ENCODE measurements at regions of chr3 and their contacts with region 1.

Region 1: DNA sequence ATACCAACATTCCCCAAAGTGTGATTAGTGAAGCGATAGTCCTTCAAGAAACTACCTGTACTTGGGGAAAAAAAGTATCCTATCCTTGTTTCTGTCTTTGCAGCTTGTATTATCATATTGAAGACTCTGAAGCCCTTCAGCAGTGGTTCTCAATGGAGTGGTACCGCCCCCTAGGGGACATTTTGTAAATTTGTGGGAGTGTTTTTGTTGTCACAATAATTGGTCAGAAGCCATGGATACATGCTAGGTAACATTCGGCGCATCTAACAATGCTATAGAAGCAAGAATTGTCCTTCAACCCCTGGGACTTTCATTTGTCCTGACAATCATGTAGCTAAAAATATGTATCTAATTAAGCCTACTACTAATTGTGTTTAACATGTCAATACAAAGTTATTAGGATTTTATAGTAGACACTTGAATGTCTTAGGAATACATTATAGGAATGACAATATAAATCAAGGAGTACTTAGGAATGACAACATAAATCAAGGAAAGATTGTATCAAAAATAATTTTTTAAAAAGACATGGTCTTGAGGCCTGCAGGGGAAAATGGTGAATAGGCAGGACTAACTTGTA is 53.7 kb downstream of the NMD3 start:
- DNase-seq: peak; percentile 63
- ATAC-seq: peak; percentile 42
- H3K4me3 Mint-ChIP-seq: no peak overlapping the region
- H3K27ac Mint-ChIP-seq: no peak overlapping the region
- H3K4me1 Mint-ChIP-seq: no peaks in the 10 kb centered on the region
- H3K27me3 Mint-ChIP-seq: no peaks in the 10 kb centered on the region

Region 2: GRCh38 chr3:160686955-160687535 is 587.8 kb before region 1 on chr3:
- CTCF ChIA-PET with region 1: interaction called, 4 read pairs
- POLR2A ChIA-PET with region 1: no interaction called
- intact Hi-C with region 1: loop called in 1 of 2 experiments (anchors 5 kb)
- DNase-seq: no peak
- ATAC-seq: no peak
- H3K4me3 Mint-ChIP-seq: no peak overlapping the region
- H3K27ac Mint-ChIP-seq: no peak overlapping the region
- H3K4me1 Mint-ChIP-seq: no peaks in the 10 kb centered on the region
- H3K27me3 Mint-ChIP-seq: peaks cover 2% of the 10 kb centered on the region

Region 3: DNA sequence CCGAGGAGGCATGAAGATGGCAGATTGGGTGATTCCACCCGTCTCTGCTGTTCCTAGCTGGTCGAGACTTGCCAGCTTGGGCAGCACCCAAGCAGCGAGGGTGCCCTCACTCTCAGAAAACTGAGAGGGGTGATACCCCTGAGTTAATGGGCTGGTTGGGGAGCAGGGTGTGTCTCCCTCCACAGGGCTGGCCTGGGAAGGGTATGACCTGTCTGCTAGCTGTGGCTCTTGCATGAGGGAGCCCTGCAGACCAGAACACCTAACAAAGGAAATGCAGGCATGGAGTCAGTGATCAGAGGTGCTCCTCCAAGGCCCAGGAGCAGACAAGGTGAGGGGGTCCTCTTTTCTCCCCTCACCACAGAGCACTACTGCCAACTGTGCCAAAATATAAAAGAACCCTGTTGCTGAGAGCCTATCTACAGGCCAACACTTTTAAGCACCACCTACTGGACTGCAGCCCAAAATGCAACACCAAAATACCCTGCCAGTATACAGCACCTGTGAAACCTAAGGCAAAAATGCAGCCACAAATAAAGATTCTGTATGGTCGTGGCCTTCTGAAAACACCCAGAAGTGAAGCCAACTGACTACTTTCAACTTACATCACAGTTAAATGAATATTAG is 554.6 kb before region 1 on chr3:
- CTCF ChIA-PET with region 1: no interaction called
- POLR2A ChIA-PET with region 1: no interaction called
- intact Hi-C with region 1: no loop called
- DNase-seq: no peak
- ATAC-seq: no peak
- H3K4me3 Mint-ChIP-seq: no peak overlapping the region
- H3K27ac Mint-ChIP-seq: no peak overlapping the region
- H3K4me1 Mint-ChIP-seq: no peaks in the 10 kb centered on the region
- H3K27me3 Mint-ChIP-seq: no peaks in the 10 kb centered on the region

Region 4: DNA sequence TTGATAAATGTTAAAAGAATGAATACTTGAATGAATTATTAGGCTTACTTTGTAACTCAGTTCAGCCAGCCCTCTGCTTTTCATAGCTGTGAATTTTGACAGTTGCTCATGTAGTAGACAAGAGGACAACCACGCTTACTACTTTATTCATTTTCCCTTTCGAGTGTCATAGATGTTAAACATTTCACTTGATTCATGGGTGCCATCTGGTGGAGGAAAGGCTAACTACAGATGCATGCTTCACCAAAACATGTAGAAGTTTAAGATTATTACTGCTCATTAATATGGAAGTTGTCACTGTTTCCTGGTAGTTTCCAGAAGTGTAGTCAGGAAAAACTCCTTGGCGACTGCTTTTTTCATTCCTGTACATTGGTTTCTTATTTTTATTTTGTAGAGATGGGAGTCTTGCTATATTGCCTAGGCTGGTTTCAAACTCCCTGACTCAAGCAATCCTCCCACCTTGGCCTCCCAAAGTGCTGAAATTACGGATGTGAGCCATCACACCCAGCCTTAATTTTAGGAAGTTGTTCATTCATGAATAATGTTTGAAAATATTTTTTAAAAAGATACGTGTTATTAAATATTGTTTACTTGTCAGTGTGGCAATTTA is 332.8 kb before region 1 on chr3:
- CTCF ChIA-PET with region 1: interaction called, 4 read pairs
- POLR2A ChIA-PET with region 1: no interaction called
- intact Hi-C with region 1: loop called in 1 of 2 experiments (anchors 5 kb)
- DNase-seq: peak; percentile 82
- ATAC-seq: peak; percentile 66
- H3K4me3 Mint-ChIP-seq: no peak overlapping the region
- H3K27ac Mint-ChIP-seq: no peak overlapping the region
- H3K4me1 Mint-ChIP-seq: peaks cover 2% of the 10 kb centered on the region
- H3K27me3 Mint-ChIP-seq: no peaks in the 10 kb centered on the region

Region 5: GRCh38 chr3:161096771-161097355 is 177.9 kb before region 1 on chr3:
- CTCF ChIA-PET with region 1: interaction called, 3 read pairs
- POLR2A ChIA-PET with region 1: no interaction called
- intact Hi-C with region 1: loop called (anchors 2 to 10 kb)
- DNase-seq: peak; percentile 36
- ATAC-seq: no peak
- H3K4me3 Mint-ChIP-seq: no peak overlapping the region
- H3K27ac Mint-ChIP-seq: no peak overlapping the region
- H3K4me1 Mint-ChIP-seq: no peaks in the 10 kb centered on the region
- H3K27me3 Mint-ChIP-seq: no peaks in the 10 kb centered on the region

Region 6: GRCh38 chr3:161284989-161285388 is 10.2 kb after region 1 on chr3:
- CTCF ChIA-PET with region 1: interaction called, 11 read pairs
- POLR2A ChIA-PET with region 1: no interaction called
- intact Hi-C with region 1: no loop called
- DNase-seq: no peak
- ATAC-seq: no peak
- H3K4me3 Mint-ChIP-seq: no peak overlapping the region
- H3K27ac Mint-ChIP-seq: no peak overlapping the region
- H3K4me1 Mint-ChIP-seq: no peaks in the 10 kb centered on the region
- H3K27me3 Mint-ChIP-seq: no peaks in the 10 kb centered on the region

Region 7: GRCh38 chr3:161423911-161424522 is 149.2 kb after region 1 on chr3:
- CTCF ChIA-PET with region 1: interaction called, 23 read pairs
- POLR2A ChIA-PET with region 1: no interaction called
- intact Hi-C with region 1: loop called (anchors 1 kb)
- DNase-seq: no peak
- ATAC-seq: no peak
- H3K4me3 Mint-ChIP-seq: no peak overlapping the region
- H3K27ac Mint-ChIP-seq: no peak overlapping the region
- H3K4me1 Mint-ChIP-seq: no peaks in the 10 kb centered on the region
- H3K27me3 Mint-ChIP-seq: no peaks in the 10 kb centered on the region